ENCODE measurements at regions of chr22 and their contacts with region 1.

Region 1: DNA sequence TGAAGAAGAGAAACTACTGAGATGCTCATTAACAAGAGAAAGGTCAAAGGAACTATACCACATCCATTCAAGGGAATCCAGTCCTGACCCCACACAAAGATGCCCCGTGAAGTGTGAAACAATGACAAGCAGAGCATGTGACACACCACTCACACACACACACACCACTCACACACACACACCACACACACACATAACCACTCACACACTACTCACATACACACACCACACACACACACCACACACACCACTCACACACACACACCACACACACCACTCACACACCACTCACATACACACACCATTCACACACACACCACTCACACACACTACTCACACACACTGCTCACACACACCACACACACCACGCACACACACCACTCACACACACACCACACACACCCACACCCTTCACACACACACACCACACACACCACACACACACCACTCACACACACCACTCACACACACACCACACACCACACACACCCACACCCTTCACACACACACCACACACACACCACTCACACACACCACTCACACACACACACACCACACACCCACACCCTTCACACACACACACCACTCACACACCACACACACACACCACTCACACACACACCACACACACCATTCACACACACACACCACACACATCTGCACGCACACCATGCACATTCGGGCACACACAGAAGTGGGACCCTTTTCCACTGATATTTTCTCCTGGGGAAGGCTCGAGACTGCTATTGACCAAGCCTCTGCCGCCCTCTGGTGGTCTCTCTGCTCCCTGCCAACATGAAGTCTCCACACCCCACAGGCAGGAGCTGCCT is 32.0 kb upstream of the COMT start:
- DNase-seq: peak; percentile 88
- ATAC-seq: peak; percentile 95
- H3K4me3 Mint-ChIP-seq: no peak overlapping the region
- H3K27ac Mint-ChIP-seq: peak overlapping the region; percentile 12
- H3K4me1 Mint-ChIP-seq: peaks cover 3% of the 10 kb centered on the region
- H3K27me3 Mint-ChIP-seq: no peaks in the 10 kb centered on the region

Region 2: DNA sequence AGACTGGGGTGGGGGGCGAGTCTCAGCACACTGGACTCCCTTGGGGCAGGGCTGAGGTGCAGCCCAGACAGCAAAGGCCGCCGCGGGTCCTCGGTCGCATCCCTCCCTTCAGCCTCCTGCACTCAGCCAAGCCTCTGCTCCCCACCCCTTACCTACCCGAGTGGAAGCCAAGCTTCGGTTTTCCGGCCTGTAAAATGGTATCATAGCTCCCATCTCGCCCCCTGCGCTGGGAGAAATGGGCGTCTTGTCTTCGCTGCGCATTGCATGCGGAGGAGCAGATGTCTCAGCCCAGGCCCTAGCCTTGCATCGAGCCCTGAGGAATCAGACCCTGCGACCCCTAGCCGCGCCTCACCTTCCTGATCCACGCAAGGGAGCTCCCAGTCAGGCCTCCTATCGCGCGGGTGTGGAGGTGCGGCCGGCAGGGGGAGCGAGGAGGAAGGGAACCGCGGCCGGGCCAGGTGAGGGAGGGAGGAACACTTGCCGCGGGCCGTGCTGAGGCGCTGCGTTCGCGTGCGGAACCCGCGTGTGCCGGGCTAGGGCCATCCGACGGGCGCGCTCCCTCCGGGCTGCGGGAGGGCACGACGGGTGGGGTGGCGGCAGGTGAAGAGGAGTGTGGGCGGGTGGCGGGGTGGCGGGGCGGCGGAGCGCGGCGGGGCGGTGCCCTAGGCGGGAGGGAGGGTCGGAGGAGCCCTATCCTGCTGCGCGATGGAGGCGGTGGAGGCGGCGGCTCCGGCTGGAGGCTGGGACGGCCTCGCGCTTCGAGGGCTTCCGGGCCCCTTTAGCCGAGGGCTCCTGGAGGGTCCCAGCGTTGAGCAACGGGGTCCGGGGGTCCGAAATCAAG is 153.1 kb before region 1 on chr22:
- CTCF ChIA-PET with region 1: interaction called, 27 read pairs
- DNase-seq: peak; percentile 73
- ATAC-seq: peak; percentile 75
- H3K4me3 Mint-ChIP-seq: no peak overlapping the region
- H3K27ac Mint-ChIP-seq: no peak overlapping the region
- H3K4me1 Mint-ChIP-seq: peaks cover 16% of the 10 kb centered on the region
- H3K27me3 Mint-ChIP-seq: peaks cover 70% of the 10 kb centered on the region

Region 3: DNA sequence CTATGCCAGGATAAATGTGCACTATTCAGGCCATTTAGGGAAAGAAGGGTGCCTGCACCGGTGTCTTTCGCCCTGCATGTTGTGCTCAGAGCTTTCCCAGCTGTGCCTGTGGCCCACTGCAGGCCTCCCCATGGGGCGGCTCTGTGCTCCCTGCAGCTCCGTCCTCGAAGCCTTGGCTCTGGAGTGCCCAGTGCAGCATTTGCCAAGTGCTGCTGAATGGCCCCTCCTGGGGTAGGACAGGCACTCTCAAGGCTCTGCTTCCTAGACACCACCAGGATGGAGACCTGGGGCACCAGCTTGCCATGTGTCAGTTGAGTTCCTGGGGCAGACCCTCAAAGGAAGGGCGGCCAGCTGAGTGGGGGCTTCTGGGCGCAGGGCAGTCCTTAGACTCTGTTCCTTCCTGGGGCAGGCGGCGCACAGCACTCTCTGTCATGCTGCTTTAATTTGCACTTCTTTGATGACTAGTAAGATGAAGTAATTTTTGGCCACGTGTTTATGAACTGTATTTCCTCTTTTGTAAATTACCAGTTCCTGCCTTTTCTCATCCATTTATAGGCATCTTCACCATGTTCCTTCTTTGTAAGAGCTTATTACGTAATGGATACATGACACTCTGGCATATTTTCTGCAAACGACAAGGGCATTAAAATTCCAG is 22.8 kb before region 1 on chr22:
- CTCF ChIA-PET with region 1: interaction called, 11 read pairs
- DNase-seq: no peak
- ATAC-seq: no peak
- H3K4me3 Mint-ChIP-seq: no peak overlapping the region
- H3K27ac Mint-ChIP-seq: peak overlapping the region; percentile 26
- H3K4me1 Mint-ChIP-seq: peaks cover 19% of the 10 kb centered on the region
- H3K27me3 Mint-ChIP-seq: no peaks in the 10 kb centered on the region

Region 4: GRCh38 chr22:19941365-19942082 is 32.0 kb after region 1 on chr22 and contains the starts of genes COMT and TXNRD2:
- CTCF ChIA-PET with region 1: interaction called, 11 read pairs
- DNase-seq: peak; percentile 84
- ATAC-seq: peak; percentile 95
- H3K4me3 Mint-ChIP-seq: peak within 1 kb of the TSS; percentile 96
- H3K27ac Mint-ChIP-seq: peak within 1 kb of the TSS; percentile 96
- H3K4me1 Mint-ChIP-seq: peaks cover 22% of the 10 kb centered on the region
- H3K27me3 Mint-ChIP-seq: no peaks in the 10 kb centered on the region
- total RNA-seq, gene COMT: 92.6 to 95.3 TPM
- total RNA-seq, gene TXNRD2: 20.5 to 23.1 TPM

Region 5: DNA sequence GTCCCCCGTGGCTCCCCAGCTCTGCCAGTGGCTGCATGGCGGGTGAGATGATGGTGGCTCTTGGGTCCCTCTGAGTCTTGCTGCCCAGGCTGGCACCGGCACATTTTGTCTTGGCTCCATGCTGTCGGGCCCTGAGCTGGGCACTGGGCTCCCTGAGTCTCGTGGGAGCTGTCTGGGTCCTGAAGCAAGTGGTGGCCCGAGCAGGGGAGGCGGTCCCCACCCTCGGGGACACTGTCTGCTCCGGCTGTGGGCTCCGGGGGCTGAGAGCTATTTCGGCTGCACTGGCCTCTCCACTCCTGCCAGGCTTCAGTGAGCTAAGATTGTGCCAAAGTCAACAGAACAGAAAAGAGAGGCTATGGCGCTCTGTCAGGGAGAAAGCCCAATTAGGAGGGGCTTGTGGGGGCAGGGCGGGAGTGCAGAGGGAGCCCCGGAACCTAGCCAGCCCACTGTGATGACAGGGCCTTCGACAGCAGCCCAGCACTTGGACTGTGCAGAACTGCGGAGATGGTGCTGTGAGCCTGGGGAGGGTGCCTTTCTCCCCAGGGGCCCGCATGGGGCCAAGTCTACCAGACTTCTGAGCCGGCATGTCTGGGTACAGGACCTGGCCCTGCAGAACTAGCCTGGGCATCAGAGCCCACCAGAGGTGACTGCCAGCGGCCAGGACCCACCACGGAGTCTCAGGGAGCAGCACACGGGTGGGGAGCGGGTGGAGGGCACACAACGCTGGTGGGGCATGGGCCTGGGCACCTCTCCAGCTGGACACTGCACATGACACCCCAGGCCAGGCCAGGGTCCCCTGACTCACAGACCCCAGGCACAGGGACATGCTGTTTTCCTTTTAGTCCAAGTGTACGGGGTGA is 320.6 kb after region 1 on chr22:
- CTCF ChIA-PET with region 1: no interaction called
- DNase-seq: no peak
- ATAC-seq: no peak
- H3K4me3 Mint-ChIP-seq: no peak overlapping the region
- H3K27ac Mint-ChIP-seq: no peak overlapping the region
- H3K4me1 Mint-ChIP-seq: no peaks in the 10 kb centered on the region
- H3K27me3 Mint-ChIP-seq: no peaks in the 10 kb centered on the region

Measured in activated CD8-positive, alpha-beta memory T cell treated with anti-CD3 and anti-CD28 coated beads, Interleukin-2, amount 10 ng/mL, durations not matched to agents 7 days and 5 days (primary cell).